ENCODE measurements at regions of chr11 and their contacts with region 1.

Region 1: GRCh38 chr11:44565211-44565952 is at the start of gene CD82:
- DNase-seq: peak; percentile 100
- ATAC-seq: peak; percentile 98
- H3K4me3 ChIP-seq: peak within 1 kb of the TSS; percentile 59
- H3K27ac ChIP-seq: peak within 1 kb of the TSS; percentile 83
- H3K4me1 ChIP-seq: peaks cover 26% of the 10 kb centered on the region
- H3K27me3 ChIP-seq: no peaks in the 10 kb centered on the region
- total RNA-seq, gene CD82: 16.7 to 33.6 (median 27.3) TPM

Region 2: DNA sequence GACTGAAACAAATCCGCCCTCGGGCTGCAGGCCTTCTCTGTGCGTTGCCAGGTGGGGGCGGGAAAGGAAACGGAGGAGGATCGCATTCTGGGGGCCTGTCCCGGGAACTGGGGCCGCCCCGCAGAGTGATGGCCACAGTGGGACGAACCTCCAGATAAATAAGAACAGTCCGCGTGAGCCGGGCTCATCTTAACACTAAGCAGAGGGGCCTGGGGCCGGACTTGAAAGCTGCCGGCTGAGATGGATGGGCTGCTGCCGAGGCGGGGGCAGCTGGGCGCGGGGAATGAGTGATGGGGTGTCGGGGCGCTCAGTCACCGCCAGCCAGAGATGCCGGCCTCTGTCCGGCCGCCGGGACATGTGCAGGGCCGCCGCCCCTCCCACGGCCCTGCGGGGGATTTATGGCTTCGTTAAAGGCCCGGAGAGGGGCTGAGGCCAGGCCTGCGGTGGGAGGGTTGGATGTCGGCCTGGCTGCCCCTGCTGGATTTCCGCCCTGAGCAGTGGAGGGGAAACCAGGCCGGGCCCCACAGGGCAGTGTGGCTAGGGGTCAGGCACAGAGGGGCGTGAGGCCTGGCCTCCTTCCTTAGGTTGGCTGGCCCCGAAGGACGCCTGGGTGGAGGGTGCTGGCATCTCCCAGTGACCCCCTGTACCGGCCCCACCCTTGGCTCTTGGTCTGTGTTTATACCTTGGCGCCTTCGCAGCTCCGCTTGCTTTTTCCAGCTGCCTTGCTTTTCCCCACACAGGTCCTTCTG is 45.2 kb before region 1 on chr11:
- intact Hi-C with region 1: no loop called
- DNase-seq: peak; percentile 53 to 79 (median 79)
- ATAC-seq: peak; percentile 78 to 89
- H3K4me3 ChIP-seq: no peak overlapping the region
- H3K27ac ChIP-seq: no peak overlapping the region
- H3K4me1 ChIP-seq: peaks cover 2% of the 10 kb centered on the region
- H3K27me3 ChIP-seq: no peaks in the 10 kb centered on the region

Region 3: GRCh38 chr11:44600839-44601383 is 35.5 kb after region 1 on chr11:
- intact Hi-C with region 1: loop called in 1 of 4 experiments (anchors 5 kb)
- DNase-seq: peak; percentile 50 to 75 (median 67)
- ATAC-seq: peak; percentile 2 to 7
- H3K4me3 ChIP-seq: no peak overlapping the region
- H3K27ac ChIP-seq: no peak overlapping the region
- H3K4me1 ChIP-seq: peaks cover 9% of the 10 kb centered on the region
- H3K27me3 ChIP-seq: no peaks in the 10 kb centered on the region

Region 4: GRCh38 chr11:44611687-44612434 is 46.5 kb after region 1 on chr11:
- intact Hi-C with region 1: loop called in 2 of 4 experiments (anchors 2 kb)
- DNase-seq: peak in 2 of 3 donors; percentile 38 to 39
- ATAC-seq: peak in 1 of 2 donors; percentile 45
- H3K4me3 ChIP-seq: no peak overlapping the region
- H3K27ac ChIP-seq: no peak overlapping the region
- H3K4me1 ChIP-seq: no peaks in the 10 kb centered on the region
- H3K27me3 ChIP-seq: no peaks in the 10 kb centered on the region

Region 5: GRCh38 chr11:44911029-44911814 is 345.8 kb after region 1 on chr11:
- intact Hi-C with region 1: loop called in 1 of 4 experiments (anchors 10 kb)
- DNase-seq: peak; percentile 85 to 91 (median 87)
- ATAC-seq: peak; percentile 78 to 83
- H3K4me3 ChIP-seq: no peak overlapping the region
- H3K27ac ChIP-seq: peak overlapping the region; percentile 33
- H3K4me1 ChIP-seq: peaks cover 2% of the 10 kb centered on the region
- H3K27me3 ChIP-seq: no peaks in the 10 kb centered on the region